ENCODE measurements at regions of chr9 and their contacts with region 1.

Region 1: GRCh38 chr9:130172858-130173665 is 858 bp downstream of the NCS1 start:
- DNase-seq: no peak
- H3K4me3 ChIP-seq: peak overlapping the region; percentile 79
- H3K27ac ChIP-seq: peak overlapping the region; percentile 21
- H3K27me3 ChIP-seq: no peaks in the 10 kb centered on the region
- CTCF ChIP-seq: no peak

Region 2: DNA sequence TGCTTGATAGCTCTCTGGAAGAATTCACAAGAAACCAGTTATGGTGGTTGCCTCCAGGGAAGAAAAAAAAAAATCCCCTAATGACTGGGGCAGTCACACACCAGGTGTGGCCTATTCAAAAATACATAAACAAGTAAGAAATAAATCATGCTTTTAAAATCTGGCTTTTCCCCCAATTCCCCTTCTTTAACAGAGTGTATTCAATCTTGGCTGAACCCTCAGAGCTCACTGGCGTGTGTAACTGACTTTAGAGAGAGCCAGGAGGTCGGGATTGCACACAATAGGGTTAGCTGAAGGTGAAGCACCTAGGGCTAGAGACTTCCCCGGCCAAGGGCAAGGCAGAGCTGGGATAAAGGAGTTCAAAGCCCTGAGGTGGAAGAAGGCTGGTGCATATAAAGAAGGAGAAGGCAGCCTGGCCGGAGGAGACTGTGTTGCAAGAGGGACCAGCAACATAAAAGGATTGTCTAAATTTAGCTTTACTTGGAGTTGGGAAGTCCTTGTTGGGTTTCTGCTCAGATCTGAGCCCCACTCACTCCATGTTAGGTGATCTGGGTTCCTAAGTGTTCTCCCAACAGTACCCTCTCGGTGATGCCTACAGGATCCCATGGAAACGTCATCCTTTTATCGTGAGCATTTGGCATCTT is 149.8 kb before region 1 on chr9:
- CTCF ChIA-PET with region 1: no interaction called
- POLR2A ChIA-PET with region 1: no interaction called
- DNase-seq: no peak
- H3K4me3 ChIP-seq: no peak overlapping the region
- H3K27ac ChIP-seq: no peak overlapping the region
- H3K27me3 ChIP-seq: no peaks in the 10 kb centered on the region
- CTCF ChIP-seq: no peak

Region 3: DNA sequence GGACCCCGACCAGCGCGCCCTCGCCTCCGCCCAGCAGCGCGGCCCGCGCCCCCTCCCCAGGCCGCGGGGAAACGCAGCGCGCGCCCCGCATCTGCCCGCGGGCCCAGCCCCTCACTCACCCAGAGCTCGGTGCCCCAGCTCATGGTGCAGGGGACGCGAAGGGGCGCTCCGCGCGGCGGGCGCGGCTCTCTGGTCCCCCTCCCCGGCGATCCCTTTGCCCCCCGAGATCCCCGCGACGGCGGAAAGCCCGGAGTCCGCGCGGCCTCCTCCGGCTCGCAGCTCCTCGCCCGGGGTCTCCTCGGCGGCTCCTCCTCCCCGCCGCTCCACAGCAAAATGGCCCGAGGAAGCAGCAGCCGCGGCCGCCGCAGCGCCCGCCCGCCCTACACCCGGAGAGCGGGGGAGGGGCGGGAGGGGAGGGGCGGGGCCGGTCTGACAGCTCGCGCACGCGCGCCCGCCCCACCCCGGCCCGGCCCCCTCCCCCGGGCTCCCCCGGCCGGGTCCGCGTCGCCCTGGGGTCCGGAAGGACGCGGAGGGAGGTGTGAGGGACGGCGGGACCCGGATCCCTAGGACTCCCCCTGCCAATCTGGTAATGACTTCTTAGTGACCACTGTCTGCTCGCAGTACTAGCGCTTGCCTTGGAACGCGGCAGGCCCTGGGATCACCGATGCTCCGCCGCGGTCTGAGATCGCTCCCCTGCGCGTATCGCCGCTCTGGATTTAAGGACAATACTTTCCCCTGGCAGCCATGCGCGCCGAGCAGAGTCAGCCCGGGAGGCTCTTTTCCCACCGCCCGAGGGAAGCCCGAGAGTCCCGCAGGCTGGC is 130.0 kb before region 1 on chr9 and contains the start of gene FNBP1:
- CTCF ChIA-PET with region 1: no interaction called
- POLR2A ChIA-PET with region 1: no interaction called
- DNase-seq: peak; percentile 30
- H3K4me3 ChIP-seq: peak within 1 kb of the TSS; percentile 86
- H3K27ac ChIP-seq: peak within 1 kb of the TSS; percentile 77
- H3K27me3 ChIP-seq: no peaks in the 10 kb centered on the region
- CTCF ChIP-seq: no peak; the same call in 1 of the 2 replicates
- polyA plus RNA-seq, gene FNBP1: 19.1 and 22.3 TPM in 2 replicates

Region 4: GRCh38 chr9:130183133-130183762 is 10.2 kb after region 1 on chr9:
- CTCF ChIA-PET with region 1: no interaction called
- POLR2A ChIA-PET with region 1: interaction called, 13 read pairs
- DNase-seq: peak; percentile 39
- H3K4me3 ChIP-seq: peak overlapping the region; percentile 12; the same call in 1 of the 2 replicates
- H3K27ac ChIP-seq: peak overlapping the region; percentile 77
- H3K27me3 ChIP-seq: no peaks in the 10 kb centered on the region
- CTCF ChIP-seq: no peak

Region 5: DNA sequence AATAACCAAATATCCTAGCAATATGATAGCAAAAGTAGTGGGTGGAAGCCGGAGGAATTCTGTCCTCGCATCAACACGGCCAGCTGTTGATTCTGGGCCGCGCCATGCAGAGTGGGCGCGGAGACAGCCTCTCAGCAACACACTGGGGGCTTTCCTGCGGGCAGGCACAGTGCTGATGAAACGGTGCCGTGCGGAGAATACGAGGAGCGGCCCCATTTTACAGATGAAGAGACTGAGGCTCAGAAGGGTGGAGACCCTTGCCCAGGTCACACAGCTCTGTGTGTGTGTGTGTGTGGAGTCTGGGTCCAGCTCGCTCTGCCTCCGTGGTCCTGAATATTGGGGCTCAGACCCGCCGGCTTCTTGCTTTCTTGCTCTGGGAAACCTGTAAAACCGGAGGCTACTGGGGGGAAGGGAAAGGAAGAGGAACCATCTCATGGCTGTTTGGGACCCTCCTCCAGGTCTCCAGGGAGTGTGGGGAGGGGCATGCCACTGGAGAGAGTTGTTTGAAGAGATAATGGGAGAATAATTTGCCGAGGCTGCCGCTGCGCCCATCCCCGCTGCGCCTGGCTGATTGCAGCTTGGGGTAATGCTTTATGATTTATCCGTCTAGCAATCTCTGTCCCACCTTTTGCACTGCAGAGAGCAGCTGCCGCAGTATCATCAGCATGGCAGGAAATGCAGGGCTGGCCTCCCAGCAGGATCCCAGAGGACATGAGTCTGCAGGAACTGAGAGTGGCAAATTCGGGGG is 35.7 kb after region 1 on chr9:
- CTCF ChIA-PET with region 1: no interaction called
- POLR2A ChIA-PET with region 1: no interaction called
- DNase-seq: no peak
- H3K4me3 ChIP-seq: no peak overlapping the region
- H3K27ac ChIP-seq: no peak overlapping the region
- H3K27me3 ChIP-seq: no peaks in the 10 kb centered on the region
- CTCF ChIP-seq: no peak

Measured in AG04450 (cell line).